Activated CD4-positive, alpha-beta memory T cell treated with anti-CD3 and anti-CD28 coated beads for 36 hours (primary cell): ENCODE measurements at regions of chr12 and their contacts with region 1.

Region 1: DNA sequence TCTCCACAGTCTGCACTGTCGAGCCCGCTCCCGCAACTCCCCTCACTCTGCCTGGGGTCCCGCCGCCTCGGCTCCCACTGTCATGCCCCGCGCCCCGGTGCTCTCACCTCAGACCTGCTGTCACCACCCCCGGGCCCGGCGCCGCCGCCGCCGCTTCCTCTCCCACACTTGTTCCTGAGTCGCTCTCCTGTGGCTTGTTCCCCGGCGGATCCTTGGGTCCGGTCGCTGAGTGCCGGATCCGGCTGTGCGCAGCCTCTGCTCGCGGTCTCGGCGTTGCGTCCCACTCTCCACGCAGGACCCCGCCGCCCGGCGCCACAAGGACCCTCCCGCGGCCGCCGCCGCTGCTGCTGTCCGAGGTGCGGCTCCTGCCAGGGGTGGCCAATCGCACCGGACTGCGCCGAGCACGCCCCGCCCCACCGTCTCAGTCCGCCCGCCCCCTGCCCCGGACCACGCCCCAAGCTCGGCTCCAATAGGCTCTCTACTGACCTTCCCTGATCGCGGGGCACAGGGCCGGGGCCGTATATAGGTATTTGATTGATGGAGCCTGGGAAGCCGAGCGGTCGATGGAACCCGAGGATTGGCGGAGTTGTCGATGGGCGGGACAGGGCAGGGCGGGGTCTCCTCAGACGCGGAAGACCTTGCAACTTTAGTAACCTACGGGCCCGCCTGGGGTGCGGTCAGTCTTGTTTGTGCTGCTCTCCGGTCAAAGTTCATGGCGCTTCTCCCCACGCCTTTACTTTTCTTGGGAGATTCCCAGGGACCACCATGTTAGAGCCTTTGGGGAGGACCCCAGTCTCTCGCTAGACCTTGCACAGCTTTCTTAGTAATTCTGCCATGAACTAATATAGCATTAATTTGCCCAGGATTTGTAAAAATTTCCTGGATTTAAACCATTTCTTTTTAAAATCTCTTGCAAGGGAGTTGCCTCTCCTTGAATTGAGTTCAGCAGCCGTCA is at the start of gene TAOK3:
- DNase-seq: peak; percentile 99
- H3K4me3 Mint-ChIP-seq: peak within 1 kb of the TSS; percentile 90
- H3K27ac Mint-ChIP-seq: peak within 1 kb of the TSS; percentile 95
- H3K4me1 Mint-ChIP-seq: peaks cover 43% of the 10 kb centered on the region
- H3K27me3 Mint-ChIP-seq: no peaks in the 10 kb centered on the region
- total RNA-seq, gene TAOK3: 47.5 to 50.4 TPM

Region 2: DNA sequence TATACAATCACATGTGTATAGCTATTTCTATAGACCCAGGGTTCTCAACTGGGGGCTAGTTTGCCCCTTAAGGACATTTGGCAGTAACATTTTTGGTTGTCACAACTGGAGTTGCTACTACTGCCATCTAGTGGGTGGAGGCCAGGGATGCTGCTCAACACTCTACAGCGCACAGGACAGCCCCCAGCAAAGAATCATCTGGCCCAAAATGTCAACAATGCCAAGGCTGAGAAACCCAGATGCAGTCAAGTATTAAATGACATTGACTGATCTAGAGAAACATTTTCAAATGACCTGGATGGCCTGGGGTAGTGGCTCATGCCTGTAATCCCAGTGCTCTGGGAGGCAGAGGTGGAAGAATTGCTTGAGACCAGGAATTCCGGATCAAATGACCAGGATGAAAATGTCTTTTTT is 317.7 kb before region 1 on chr12:
- CTCF ChIA-PET with region 1: interaction called, 3 read pairs
- POLR2A ChIA-PET with region 1: no interaction called
- intact Hi-C with region 1: loop called (anchors 2 kb)
- DNase-seq: peak; percentile 87
- H3K4me3 Mint-ChIP-seq: no peak overlapping the region
- H3K27ac Mint-ChIP-seq: peak overlapping the region; percentile 9
- H3K4me1 Mint-ChIP-seq: peaks cover 60% of the 10 kb centered on the region
- H3K27me3 Mint-ChIP-seq: no peaks in the 10 kb centered on the region

Region 3: GRCh38 chr12:118135788-118136558 is 236.8 kb before region 1 on chr12 and contains the start of gene PEBP1:
- CTCF ChIA-PET with region 1: interaction called, 31 read pairs
- POLR2A ChIA-PET with region 1: interaction called, 14 read pairs
- intact Hi-C with region 1: loop called (anchors 1 kb)
- DNase-seq: peak; percentile 97
- H3K4me3 Mint-ChIP-seq: peak within 1 kb of the TSS; percentile 91
- H3K27ac Mint-ChIP-seq: peak within 1 kb of the TSS; percentile 74
- H3K4me1 Mint-ChIP-seq: peaks cover 27% of the 10 kb centered on the region
- H3K27me3 Mint-ChIP-seq: no peaks in the 10 kb centered on the region
- total RNA-seq, gene PEBP1: 128 to 132 TPM

Region 4: DNA sequence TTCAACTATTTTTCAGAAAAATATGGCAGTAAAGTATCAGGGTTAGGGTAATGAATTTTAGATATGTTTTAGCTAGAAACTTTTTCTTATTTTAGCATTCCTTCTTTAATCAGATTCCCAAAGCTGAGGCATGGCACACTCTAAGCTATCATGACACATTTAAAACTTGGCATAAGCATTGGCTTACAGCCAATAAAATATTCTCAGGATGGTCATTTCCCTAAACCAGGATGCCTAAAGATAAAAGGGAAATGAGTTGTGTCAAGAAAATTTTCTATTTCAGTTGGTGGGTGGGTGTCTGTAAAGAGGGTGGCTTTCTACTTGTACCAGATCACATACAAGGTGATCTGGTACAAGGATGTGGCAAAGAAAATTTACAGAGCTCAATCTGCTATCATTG is 189.1 kb before region 1 on chr12:
- CTCF ChIA-PET with region 1: interaction called, 113 read pairs
- POLR2A ChIA-PET with region 1: interaction called, 5 read pairs
- intact Hi-C with region 1: loop called (anchors 1 kb)
- DNase-seq: no peak
- H3K4me3 Mint-ChIP-seq: no peak overlapping the region
- H3K27ac Mint-ChIP-seq: no peak overlapping the region
- H3K4me1 Mint-ChIP-seq: peaks cover 20% of the 10 kb centered on the region
- H3K27me3 Mint-ChIP-seq: no peaks in the 10 kb centered on the region

Region 5: GRCh38 chr12:118290130-118290529 is 82.7 kb before region 1 on chr12:
- CTCF ChIA-PET with region 1: interaction called, 13 read pairs
- POLR2A ChIA-PET with region 1: interaction called, 3 read pairs
- intact Hi-C with region 1: no loop called
- DNase-seq: no peak
- H3K4me3 Mint-ChIP-seq: no peak overlapping the region
- H3K27ac Mint-ChIP-seq: no peak overlapping the region
- H3K4me1 Mint-ChIP-seq: no peaks in the 10 kb centered on the region
- H3K27me3 Mint-ChIP-seq: no peaks in the 10 kb centered on the region

Region 6: GRCh38 chr12:118357257-118358007 is 15.4 kb before region 1 on chr12:
- CTCF ChIA-PET with region 1: interaction called, 94 read pairs
- POLR2A ChIA-PET with region 1: interaction called, 7 read pairs
- intact Hi-C with region 1: loop called (anchors 1 kb)
- DNase-seq: peak; percentile 65
- H3K4me3 Mint-ChIP-seq: peak overlapping the region; percentile 90
- H3K27ac Mint-ChIP-seq: peak overlapping the region; percentile 90
- H3K4me1 Mint-ChIP-seq: peaks cover 49% of the 10 kb centered on the region
- H3K27me3 Mint-ChIP-seq: no peaks in the 10 kb centered on the region

Region 7: GRCh38 chr12:118611295-118611694 is 238.5 kb after region 1 on chr12:
- CTCF ChIA-PET with region 1: no interaction called
- POLR2A ChIA-PET with region 1: no interaction called
- intact Hi-C with region 1: no loop called
- DNase-seq: no peak
- H3K4me3 Mint-ChIP-seq: no peak overlapping the region
- H3K27ac Mint-ChIP-seq: no peak overlapping the region
- H3K4me1 Mint-ChIP-seq: no peaks in the 10 kb centered on the region
- H3K27me3 Mint-ChIP-seq: peaks cover 2% of the 10 kb centered on the region